ENCODE measurements at regions of chr1 and their contacts with region 1.

Region 1: DNA sequence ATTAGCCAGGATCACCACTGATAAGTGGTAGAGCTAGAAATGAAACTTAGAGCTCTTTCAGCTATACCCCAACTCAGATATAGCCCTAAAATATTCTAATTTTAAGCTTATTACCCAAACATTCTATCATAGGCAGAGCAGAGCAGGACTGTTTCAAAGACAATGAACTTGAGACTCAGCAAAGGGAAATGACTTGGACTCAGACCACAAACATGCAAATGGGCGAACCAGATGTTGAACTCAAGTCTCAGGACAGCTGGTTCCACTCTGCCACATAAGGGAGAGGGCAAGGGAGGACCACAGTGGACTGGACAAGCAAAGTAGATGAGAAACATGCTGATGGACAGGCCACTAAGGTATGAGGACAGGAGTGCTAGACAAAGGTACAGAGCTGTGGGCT is 315.3 kb downstream of the OMA1 start:
- DNase-seq: no peak
- H3K4me3 ChIP-seq: no peak overlapping the region
- H3K27ac ChIP-seq: no peak overlapping the region
- H3K4me1 ChIP-seq: no peaks in the 10 kb centered on the region
- H3K27me3 ChIP-seq: no peaks in the 10 kb centered on the region
- CTCF ChIP-seq: no peak

Region 2: GRCh38 chr1:57424231-57425027 is 806.8 kb before region 1 on chr1:
- intact Hi-C with region 1: loop called (anchors 5 kb)
- DNase-seq: no peak
- H3K4me3 ChIP-seq: peak overlapping the region; percentile 36 to 46
- H3K27ac ChIP-seq: no peak overlapping the region
- H3K4me1 ChIP-seq: peaks cover 0 to 30% (median 29%) of the 10 kb centered on the region in 4 donors
- H3K27me3 ChIP-seq: peaks cover 0 to 53% of the 10 kb centered on the region in 2 donors
- CTCF ChIP-seq: peak in 1 of 2 experiments; percentile 15

Region 3: DNA sequence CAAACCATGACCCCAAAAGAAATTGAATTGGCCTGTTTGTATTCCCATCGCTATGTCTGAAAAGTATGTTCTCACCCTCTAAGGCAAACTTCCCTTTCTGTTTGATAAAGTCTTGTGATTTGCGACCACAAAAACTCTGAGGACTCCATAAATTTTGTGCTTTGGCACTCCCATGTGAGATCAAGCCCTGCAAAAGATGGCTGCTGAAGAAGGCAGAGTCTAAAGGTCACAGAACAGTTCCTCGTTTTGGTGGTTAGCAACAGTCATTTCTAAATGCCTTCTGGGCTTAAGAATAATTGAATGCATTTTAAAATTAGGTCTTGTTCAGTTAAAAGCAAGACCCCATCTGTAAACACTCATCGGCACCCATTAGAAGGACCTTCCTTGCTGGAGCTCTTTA is 126.2 kb before region 1 on chr1:
- intact Hi-C with region 1: no loop called
- DNase-seq: no peak
- H3K4me3 ChIP-seq: no peak overlapping the region
- H3K27ac ChIP-seq: no peak overlapping the region
- H3K4me1 ChIP-seq: no peaks in the 10 kb centered on the region
- H3K27me3 ChIP-seq: no peaks in the 10 kb centered on the region
- CTCF ChIP-seq: no peak

Region 4: DNA sequence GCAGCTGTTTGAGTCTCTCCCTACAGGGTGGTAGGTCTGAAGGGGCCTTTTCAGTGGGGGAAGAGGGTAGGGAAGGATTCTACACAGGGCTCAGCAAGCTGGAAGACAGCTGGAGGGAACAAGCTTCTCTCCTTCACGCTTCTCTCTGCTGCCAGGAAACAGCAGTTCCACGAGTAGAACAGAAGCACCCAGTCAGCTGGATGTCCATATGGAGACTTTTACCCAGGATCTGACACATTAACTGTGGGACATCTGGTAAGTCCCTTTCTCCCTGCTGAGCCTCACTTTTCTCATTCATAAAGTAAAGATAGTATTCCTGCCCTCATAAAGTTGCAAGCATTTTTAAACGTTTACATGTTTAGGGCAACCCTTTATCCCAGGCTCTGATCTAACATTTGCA is 35.0 kb after region 1 on chr1:
- intact Hi-C with region 1: no loop called
- DNase-seq: no peak
- H3K4me3 ChIP-seq: no peak overlapping the region
- H3K27ac ChIP-seq: no peak overlapping the region
- H3K4me1 ChIP-seq: no peaks in the 10 kb centered on the region
- H3K27me3 ChIP-seq: no peaks in the 10 kb centered on the region
- CTCF ChIP-seq: no peak